ENCODE measurements at regions of chr17 and their contacts with region 1.

Region 1: GRCh38 chr17:75855310-75856081 is at the start of gene WBP2:
- DNase-seq: peak; percentile 100
- H3K4me3 ChIP-seq: peak within 1 kb of the TSS; percentile 79 to 92 (median 86)
- H3K27ac ChIP-seq: peak within 1 kb of the TSS; percentile 98 to 100 (median 100)
- H3K4me1 ChIP-seq: peaks cover 51 to 63% (median 57%) of the 10 kb centered on the region in 4 donors
- H3K27me3 ChIP-seq: no peaks in the 10 kb centered on the region
- CTCF ChIP-seq: peak; percentile 58 to 73 (median 62)
- EP300 ChIP-seq: no peak
- POLR2A ChIP-seq: peak; percentile 97
- total RNA-seq, gene WBP2: 48.2 to 95.8 (median 85.2) TPM

Region 2: GRCh38 chr17:75896415-75897159 is 41.1 kb after region 1 on chr17 and contains the start of gene TRIM65:
- intact Hi-C with region 1: loop called (anchors 2 kb)
- DNase-seq: no peak
- H3K4me3 ChIP-seq: peak within 1 kb of the TSS; percentile 73 to 99 (median 77)
- H3K27ac ChIP-seq: peak within 1 kb of the TSS; percentile 89 to 98 (median 96)
- H3K4me1 ChIP-seq: peaks cover 25 to 55% (median 52%) of the 10 kb centered on the region in 4 donors
- H3K27me3 ChIP-seq: no peaks in the 10 kb centered on the region
- CTCF ChIP-seq: peak; percentile 51 to 62 (median 54)
- EP300 ChIP-seq: no peak
- POLR2A ChIP-seq: peak; percentile 66
- total RNA-seq, gene TRIM65: 13.3 to 36.4 (median 27.4) TPM

Region 3: GRCh38 chr17:76014184-76014924 is 158.9 kb after region 1 on chr17:
- intact Hi-C with region 1: no loop called
- DNase-seq: no peak
- H3K4me3 ChIP-seq: no peak overlapping the region
- H3K27ac ChIP-seq: no peak overlapping the region
- H3K4me1 ChIP-seq: peaks cover 0 to 9% (median 7%) of the 10 kb centered on the region in 4 donors
- H3K27me3 ChIP-seq: peaks cover 0 to 9% (median 0%) of the 10 kb centered on the region in 4 donors
- CTCF ChIP-seq: peak in 2 of 3 experiments; percentile 80 to 87
- EP300 ChIP-seq: no peak
- POLR2A ChIP-seq: no peak